AG04450 (cell line): ENCODE measurements at regions of chr12 and their contacts with region 1.

Region 1: DNA sequence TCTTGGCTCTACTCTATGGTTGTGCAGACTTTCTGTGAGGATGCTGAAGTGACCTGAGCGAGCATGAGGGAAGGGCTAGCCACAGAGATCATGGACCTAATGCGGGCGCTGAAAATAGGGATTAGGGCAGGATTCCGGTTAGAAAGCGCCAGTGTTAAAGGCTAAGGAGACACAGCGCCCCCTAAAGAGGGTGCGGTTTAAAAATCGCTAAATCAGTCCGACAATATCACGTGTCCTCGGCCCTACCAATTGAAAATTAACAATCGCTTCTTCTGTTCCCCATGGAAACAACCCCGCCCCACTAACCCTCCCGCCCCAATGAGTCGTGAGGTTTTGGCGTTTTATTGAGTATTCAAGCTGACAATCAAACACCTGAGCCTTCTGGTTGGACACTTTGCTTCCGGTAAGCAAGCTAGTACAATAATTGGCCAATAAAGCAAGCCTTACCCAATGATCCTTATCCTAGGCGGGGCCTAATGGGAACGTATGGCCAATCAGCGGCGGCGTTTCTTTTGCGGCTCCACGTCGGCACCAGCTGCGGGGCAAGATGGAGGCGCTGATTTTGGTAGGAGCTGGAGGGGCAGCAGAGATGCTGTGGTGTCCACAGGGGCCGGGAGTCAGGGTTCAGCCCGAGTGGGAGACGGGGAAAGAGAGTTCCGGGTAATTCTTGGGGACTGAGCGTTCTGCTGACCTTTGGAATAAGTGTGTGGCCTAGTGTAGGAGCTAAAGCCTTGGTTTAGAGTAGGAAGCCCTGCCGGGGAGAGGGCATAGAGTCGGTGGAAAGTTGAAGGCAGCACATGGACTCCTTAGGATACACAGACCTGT is at the start of gene COPZ1:
- DNase-seq: peak; percentile 99
- H3K4me3 ChIP-seq: peak within 1 kb of the TSS; percentile 75
- H3K27ac ChIP-seq: peak within 1 kb of the TSS; percentile 88
- H3K27me3 ChIP-seq: no peaks in the 10 kb centered on the region
- CTCF ChIP-seq: peak; percentile 83
- polyA plus RNA-seq, gene COPZ1: 355 and 404 TPM in 2 replicates

Region 2: GRCh38 chr12:54214553-54215406 is 110.0 kb before region 1 on chr12:
- CTCF ChIA-PET with region 1: interaction called, 40 read pairs
- POLR2A ChIA-PET with region 1: no interaction called
- DNase-seq: peak; percentile 60
- H3K4me3 ChIP-seq: peak overlapping the region; percentile 39
- H3K27ac ChIP-seq: no peak overlapping the region
- H3K27me3 ChIP-seq: peaks cover 22% of the 10 kb centered on the region
- CTCF ChIP-seq: peak; percentile 94

Region 3: DNA sequence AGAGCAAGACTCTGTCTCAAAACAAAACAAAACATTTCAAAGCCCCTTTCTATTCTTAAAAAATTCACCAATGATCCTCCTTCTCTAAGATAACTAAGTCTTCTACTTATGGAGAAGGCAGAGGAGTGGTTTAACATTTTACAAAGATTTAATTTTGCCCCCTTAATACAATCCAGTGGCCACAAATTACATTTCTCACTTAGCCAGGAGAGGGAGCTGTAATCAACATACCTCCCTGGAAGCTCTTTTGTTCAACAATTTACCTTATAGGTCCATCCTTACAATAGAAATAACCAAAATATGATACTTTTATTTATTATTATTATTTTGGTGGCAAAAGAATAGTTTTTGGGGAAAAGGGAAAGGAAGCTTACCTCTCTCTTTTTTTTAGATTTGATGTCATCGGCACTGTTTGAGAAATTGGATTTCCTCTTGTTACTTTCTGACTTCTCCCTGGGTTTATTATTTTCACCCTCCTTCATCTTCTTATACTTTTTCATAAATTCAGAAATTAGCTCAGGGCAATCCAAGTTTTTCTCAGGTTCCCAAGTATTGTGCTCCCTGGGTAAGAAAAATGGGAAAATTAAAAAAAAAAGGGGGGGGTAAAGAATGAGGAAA is 73.1 kb before region 1 on chr12:
- CTCF ChIA-PET with region 1: interaction called, 21 read pairs
- POLR2A ChIA-PET with region 1: interaction called, 3 read pairs
- DNase-seq: no peak
- H3K4me3 ChIP-seq: no peak overlapping the region
- H3K27ac ChIP-seq: no peak overlapping the region
- H3K27me3 ChIP-seq: no peaks in the 10 kb centered on the region
- CTCF ChIP-seq: peak; percentile 76

Region 4: GRCh38 chr12:54285150-54286041 is 39.4 kb before region 1 on chr12:
- CTCF ChIA-PET with region 1: interaction called, 37 read pairs
- POLR2A ChIA-PET with region 1: interaction called, 17 read pairs
- DNase-seq: no peak
- H3K4me3 ChIP-seq: 0 out of 2 replicates have a peak overlapping the region, but pooled peaks have one; percentile 7
- H3K27ac ChIP-seq: peak overlapping the region; percentile 31
- H3K27me3 ChIP-seq: no peaks in the 10 kb centered on the region
- CTCF ChIP-seq: peak; percentile 46

Region 5: GRCh38 chr12:54306925-54307741 is 17.7 kb before region 1 on chr12:
- CTCF ChIA-PET with region 1: interaction called, 50 read pairs
- POLR2A ChIA-PET with region 1: interaction called, 3 read pairs
- DNase-seq: no peak
- H3K4me3 ChIP-seq: no peak overlapping the region
- H3K27ac ChIP-seq: no peak overlapping the region
- H3K27me3 ChIP-seq: peaks cover 21% of the 10 kb centered on the region
- CTCF ChIP-seq: no peak

Region 6: GRCh38 chr12:54368709-54369583 is 44.1 kb after region 1 on chr12:
- CTCF ChIA-PET with region 1: interaction called, 17 read pairs
- POLR2A ChIA-PET with region 1: no interaction called
- DNase-seq: peak; percentile 85
- H3K4me3 ChIP-seq: peak overlapping the region; percentile 27; the same call in 1 of the 2 replicates
- H3K27ac ChIP-seq: peak overlapping the region; percentile 24
- H3K27me3 ChIP-seq: no peaks in the 10 kb centered on the region
- CTCF ChIP-seq: peak; percentile 94

Region 7: DNA sequence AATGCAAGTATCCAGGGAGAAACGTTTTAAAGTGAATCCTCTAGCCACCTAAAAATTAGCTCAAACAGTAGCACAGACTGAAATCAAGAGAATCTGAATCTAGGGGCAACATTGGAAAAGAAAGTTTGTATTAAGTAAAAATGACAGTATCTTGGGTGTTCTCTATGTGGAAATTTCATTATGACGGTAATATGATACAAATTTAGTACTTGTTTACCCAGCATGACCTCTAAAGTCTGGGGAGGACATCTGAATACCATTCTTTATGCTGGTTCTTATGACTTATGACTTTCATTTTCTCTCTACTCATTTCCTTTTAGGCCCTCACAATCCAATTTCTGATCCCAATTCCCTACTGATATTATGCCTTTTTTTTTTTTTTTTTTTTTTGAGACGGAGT is 134.5 kb after region 1 on chr12:
- CTCF ChIA-PET with region 1: no interaction called
- POLR2A ChIA-PET with region 1: no interaction called
- DNase-seq: no peak
- H3K4me3 ChIP-seq: no peak overlapping the region
- H3K27ac ChIP-seq: no peak overlapping the region
- H3K27me3 ChIP-seq: peaks cover 33% of the 10 kb centered on the region
- CTCF ChIP-seq: no peak